CD8-positive, alpha-beta memory T cell (primary cell): ENCODE measurements at regions of chr2 and their contacts with region 1.

Region 1: DNA sequence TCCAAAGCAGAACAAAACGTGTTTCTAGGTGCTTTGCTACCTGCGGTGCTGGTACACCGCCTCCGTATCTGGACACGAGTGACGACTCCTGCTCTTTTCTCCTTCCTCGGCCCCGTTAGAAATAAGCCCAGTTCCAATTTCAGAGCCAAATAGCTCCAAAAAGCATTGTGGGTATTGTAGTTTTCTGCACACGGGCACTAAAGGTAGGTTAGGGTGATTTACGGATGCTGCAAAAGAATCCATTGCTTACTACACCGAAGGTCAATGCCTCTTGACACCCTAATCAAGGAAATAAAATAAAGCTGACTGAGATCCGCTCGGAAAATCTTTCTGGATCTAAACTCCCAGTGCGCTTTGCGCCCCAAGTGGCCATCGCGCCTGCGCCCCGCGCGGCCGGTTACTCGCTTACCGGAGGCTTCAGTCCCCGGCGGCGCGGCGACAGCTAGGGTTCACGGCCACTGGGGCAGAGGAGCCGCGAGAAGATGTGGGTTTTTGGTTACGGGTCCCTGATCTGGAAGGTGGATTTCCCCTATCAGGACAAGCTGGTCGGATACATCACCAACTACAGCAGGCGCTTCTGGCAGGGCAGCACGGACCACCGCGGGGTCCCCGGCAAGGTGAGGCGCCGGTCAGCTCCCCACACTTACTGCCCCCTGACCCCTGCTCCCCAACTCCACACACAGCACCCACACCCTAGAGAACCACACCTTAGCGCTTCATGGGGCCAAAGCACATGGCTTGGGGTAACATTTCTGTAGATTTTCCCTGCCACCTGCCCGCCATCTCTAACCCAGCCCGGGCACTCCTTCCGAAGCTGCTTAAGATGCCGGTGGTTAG is at the start of gene CHAC2:
- DNase-seq: peak; percentile 79 to 88 (median 83)
- H3K4me3 ChIP-seq: peak within 1 kb of the TSS; percentile 90
- H3K4me3 Mint-ChIP-seq: peak within 1 kb of the TSS; percentile 87 to 99 (median 94)
- H3K27ac ChIP-seq: peak within 1 kb of the TSS; percentile 78
- H3K27ac Mint-ChIP-seq: peak within 1 kb of the TSS; percentile 85 to 97 (median 95)
- H3K4me1 ChIP-seq: peaks cover 4% of the 10 kb centered on the region
- H3K4me1 Mint-ChIP-seq: peaks cover 26 to 40% (median 32%) of the 10 kb centered on the region in 3 donors
- H3K27me3 ChIP-seq: no peaks in the 10 kb centered on the region
- H3K27me3 Mint-ChIP-seq: no peaks in the 10 kb centered on the region
- total RNA-seq, gene CHAC2: 25.6 to 27.4 TPM

Region 2: DNA sequence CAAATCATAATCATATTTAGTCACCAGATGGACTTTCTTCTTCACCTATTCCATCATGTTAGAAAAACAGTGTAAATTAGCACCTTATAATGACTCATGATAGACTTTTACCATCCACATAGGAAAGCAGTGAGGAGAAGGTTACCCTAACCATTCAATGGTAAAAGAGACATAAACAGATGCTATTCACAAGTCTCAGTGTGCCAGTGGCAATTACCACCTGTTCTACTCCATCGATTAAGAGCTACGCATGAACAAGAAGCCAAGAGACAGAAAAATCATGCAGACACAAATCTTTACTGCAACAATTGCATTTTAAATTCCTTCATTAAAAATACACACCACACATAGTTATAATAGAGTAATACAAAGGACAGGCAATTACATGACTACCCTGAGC is 106.7 kb before region 1 on chr2:
- CTCF ChIA-PET with region 1: no interaction called
- POLR2A ChIA-PET with region 1: no interaction called
- DNase-seq: no peak
- H3K4me3 ChIP-seq: no peak overlapping the region
- H3K4me3 Mint-ChIP-seq: no peak overlapping the region
- H3K27ac ChIP-seq: no peak overlapping the region
- H3K27ac Mint-ChIP-seq: no peak overlapping the region
- H3K4me1 ChIP-seq: no peaks in the 10 kb centered on the region
- H3K4me1 Mint-ChIP-seq: peaks cover 0 to 4% (median 0%) of the 10 kb centered on the region in 3 donors
- H3K27me3 ChIP-seq: no peaks in the 10 kb centered on the region
- H3K27me3 Mint-ChIP-seq: no peaks in the 10 kb centered on the region

Region 3: DNA sequence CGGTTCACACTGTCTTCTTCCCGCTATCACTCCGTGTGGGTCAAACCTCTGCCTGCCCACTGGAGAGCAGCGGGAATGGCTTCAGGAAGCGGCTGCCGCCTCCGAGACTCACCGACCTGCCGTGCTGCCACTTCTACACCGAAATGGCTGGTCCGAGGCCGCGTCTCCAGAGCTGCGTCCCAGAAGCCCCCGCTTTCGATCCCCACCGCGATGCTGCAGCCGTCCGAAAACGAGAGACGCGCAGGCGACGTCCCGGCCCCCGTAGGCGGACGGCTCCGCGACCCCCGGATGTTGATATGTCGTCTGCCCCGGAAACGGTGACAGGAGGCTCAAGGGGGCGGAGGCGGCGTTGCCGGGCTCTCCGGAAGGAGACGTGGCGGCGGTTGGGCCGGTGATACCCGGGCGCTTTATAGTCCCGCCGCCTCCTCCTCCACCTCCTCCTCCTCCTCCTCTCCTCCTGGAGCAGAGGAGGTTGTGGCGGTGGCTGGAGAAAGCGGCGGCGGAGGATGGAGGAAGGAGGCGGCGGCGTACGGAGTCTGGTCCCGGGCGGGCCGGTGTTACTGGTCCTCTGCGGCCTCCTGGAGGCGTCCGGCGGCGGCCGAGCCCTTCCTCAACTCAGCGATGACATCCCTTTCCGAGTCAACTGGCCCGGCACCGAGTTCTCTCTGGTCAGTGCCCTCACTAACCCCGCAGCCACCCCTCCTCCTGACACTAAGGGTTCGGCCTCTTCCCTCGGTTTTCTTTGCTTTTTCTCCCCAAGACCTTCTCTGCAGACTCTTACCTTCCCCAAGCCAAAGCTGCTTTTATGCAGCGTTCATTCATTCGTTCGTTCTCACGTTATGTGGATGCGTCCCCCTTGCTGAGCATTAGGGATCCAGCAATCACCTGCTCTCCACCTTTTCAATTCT is 19.3 kb after region 1 on chr2 and contains the starts of genes ASB3 and ERLEC1:
- CTCF ChIA-PET with region 1: interaction called, 4 read pairs
- POLR2A ChIA-PET with region 1: interaction called, 17 read pairs
- DNase-seq: peak; percentile 85 to 92 (median 90)
- H3K4me3 ChIP-seq: peak within 1 kb of the TSS; percentile 80
- H3K4me3 Mint-ChIP-seq: peak within 1 kb of the TSS; percentile 93 to 99 (median 96)
- H3K27ac ChIP-seq: peak within 1 kb of the TSS; percentile 86
- H3K27ac Mint-ChIP-seq: peak within 1 kb of the TSS; percentile 91 to 99 (median 97)
- H3K4me1 ChIP-seq: peaks cover 41% of the 10 kb centered on the region
- H3K4me1 Mint-ChIP-seq: peaks cover 59 to 74% (median 67%) of the 10 kb centered on the region in 3 donors
- H3K27me3 ChIP-seq: no peaks in the 10 kb centered on the region
- H3K27me3 Mint-ChIP-seq: no peaks in the 10 kb centered on the region
- total RNA-seq, gene ASB3: 17.8 to 24.4 TPM
- total RNA-seq, gene ERLEC1: 25.4 to 26.4 TPM